Activated CD8-positive, alpha-beta memory T cell treated with anti-CD3 and anti-CD28 coated beads, Interleukin-2, amount 10 ng/mL, durations not matched to agents 7 days and 5 days (primary cell): ENCODE measurements at regions of chr2 and their contacts with region 1.

Region 1: DNA sequence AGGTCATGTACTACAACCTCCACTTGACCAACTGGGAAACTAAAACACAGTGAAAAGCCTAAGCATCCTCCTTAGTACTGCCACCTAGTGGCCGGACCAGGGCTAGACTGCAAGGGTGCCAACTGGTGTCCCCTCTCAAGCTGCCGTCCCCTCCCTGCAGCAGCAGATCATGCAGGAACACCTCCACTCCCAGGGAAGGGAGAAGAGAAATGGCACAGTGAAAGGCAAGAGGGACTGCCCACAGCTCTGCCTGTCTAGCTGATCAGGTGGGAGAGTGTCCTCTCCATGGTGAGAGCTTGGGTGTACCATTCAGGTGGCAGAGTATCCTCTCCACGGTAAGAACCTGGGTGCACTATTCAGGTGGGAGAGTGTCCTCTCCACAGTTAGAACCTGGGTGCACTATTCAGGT is 78.1 kb downstream of the AAK1 start:
- DNase-seq: peak; percentile 80
- ATAC-seq: peak; percentile 90
- H3K4me3 Mint-ChIP-seq: no peak overlapping the region
- H3K27ac Mint-ChIP-seq: no peak overlapping the region
- H3K4me1 Mint-ChIP-seq: peaks cover 43% of the 10 kb centered on the region
- H3K27me3 Mint-ChIP-seq: no peaks in the 10 kb centered on the region

Region 2: GRCh38 chr2:69375494-69376353 is 189.7 kb before region 1 on chr2:
- CTCF ChIA-PET with region 1: interaction called, 16 read pairs
- DNase-seq: no peak
- ATAC-seq: peak; percentile 86
- H3K4me3 Mint-ChIP-seq: no peak overlapping the region
- H3K27ac Mint-ChIP-seq: no peak overlapping the region
- H3K4me1 Mint-ChIP-seq: peaks cover 12% of the 10 kb centered on the region
- H3K27me3 Mint-ChIP-seq: no peaks in the 10 kb centered on the region

Region 3: DNA sequence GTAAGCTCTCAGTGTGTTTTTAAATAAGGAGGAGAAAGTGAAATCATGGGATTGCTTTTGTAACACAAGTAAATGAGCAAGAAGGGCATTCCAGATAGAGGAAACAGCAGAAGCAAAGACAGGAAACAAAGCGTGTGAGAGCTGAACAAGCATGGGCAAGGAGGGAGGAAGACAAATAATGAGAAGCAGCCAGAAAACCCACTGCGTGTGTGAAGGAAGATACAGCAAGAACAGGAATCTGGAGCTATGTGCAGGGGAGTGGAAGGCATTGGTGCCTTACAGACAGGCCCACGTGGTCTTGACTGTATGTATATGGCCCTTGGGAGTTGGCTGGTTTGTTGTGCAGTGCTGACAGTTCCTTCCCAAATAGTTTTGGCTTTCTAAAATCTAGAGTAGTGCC is 10.5 kb before region 1 on chr2:
- CTCF ChIA-PET with region 1: interaction called, 27 read pairs
- DNase-seq: no peak
- ATAC-seq: no peak
- H3K4me3 Mint-ChIP-seq: no peak overlapping the region
- H3K27ac Mint-ChIP-seq: peak overlapping the region; percentile 9
- H3K4me1 Mint-ChIP-seq: peaks cover 19% of the 10 kb centered on the region
- H3K27me3 Mint-ChIP-seq: no peaks in the 10 kb centered on the region

Region 4: GRCh38 chr2:69600425-69600824 is 35.0 kb after region 1 on chr2:
- CTCF ChIA-PET with region 1: interaction called, 15 read pairs
- DNase-seq: peak; percentile 63
- ATAC-seq: peak; percentile 48
- H3K4me3 Mint-ChIP-seq: peak overlapping the region; percentile 28
- H3K27ac Mint-ChIP-seq: peak overlapping the region; percentile 76
- H3K4me1 Mint-ChIP-seq: peaks cover 74% of the 10 kb centered on the region
- H3K27me3 Mint-ChIP-seq: no peaks in the 10 kb centered on the region

Region 5: DNA sequence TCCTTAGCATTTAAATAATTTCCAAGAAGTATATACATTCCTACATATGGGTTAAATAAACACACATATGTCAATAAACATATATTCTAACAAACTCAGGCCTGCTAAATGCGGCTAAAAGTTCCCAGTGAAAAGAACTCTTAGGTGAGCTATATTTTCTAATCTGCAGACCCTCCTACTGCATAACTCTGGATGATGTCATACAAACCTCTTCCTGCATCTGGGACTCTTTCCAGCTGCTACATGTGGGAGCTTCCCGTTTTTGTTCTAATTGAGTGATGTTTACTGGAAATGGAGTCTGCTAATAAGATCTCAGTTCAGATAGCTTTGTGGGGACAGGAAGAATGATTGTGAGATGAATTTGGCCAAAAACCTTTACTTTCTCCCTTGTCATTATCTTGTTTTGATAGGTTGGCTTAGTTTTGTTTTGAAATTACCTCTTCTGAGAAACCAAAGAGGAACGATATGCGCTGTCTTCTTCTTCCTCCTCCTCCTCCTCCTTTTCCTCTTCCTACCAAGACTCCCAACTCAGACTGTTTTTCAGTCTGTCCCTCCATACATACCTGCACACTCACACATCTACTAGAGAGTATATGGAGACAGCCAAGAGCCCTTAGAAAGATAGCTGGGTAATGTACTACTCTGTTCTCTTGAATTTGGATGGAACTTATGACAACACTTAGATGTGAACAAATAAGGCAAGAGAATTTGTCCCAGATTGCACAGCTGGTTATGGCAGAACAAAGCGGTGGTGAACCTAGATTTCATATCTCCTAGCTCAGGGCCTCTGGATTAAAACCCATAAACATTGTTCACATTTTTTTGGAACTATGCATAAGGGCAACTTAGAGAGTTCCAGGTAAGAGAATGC is 117.9 kb after region 1 on chr2:
- CTCF ChIA-PET with region 1: interaction called, 10 read pairs
- DNase-seq: no peak
- ATAC-seq: peak; percentile 45
- H3K4me3 Mint-ChIP-seq: peak overlapping the region; percentile 18
- H3K27ac Mint-ChIP-seq: peak overlapping the region; percentile 71
- H3K4me1 Mint-ChIP-seq: peaks cover 53% of the 10 kb centered on the region
- H3K27me3 Mint-ChIP-seq: no peaks in the 10 kb centered on the region

Region 6: GRCh38 chr2:69724540-69725159 is 159.2 kb after region 1 on chr2:
- CTCF ChIA-PET with region 1: interaction called, 23 read pairs
- DNase-seq: peak; percentile 90
- ATAC-seq: peak; percentile 95
- H3K4me3 Mint-ChIP-seq: peak overlapping the region; percentile 69
- H3K27ac Mint-ChIP-seq: no peak overlapping the region
- H3K4me1 Mint-ChIP-seq: peaks cover 8% of the 10 kb centered on the region
- H3K27me3 Mint-ChIP-seq: peaks cover 3% of the 10 kb centered on the region